ENCODE measurements at regions of chr6 and their contacts with region 1.

Region 1: GRCh38 chr6:29834564-29835436 is 7.2 kb downstream of the HLA-G start:
- DNase-seq: no peak
- CTCF ChIP-seq: peak; percentile 77

Region 2: DNA sequence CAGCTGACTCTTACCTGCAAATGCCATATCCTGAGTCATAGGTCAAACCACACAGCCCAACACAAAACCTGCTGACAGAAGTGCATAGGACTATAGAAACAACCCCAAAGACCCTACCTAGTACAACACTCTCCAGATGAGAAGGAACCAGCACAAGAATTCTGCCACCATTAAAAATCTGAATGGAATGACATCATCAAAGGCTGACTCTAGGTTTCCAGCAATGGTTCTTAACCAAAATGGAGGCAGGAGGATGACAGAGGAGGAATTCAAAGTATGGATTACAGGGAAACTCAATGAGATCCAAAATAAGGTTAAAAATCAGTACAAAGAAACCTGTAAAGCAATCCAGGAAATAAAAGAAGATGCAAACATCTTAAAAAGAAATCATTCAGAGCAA is 502.1 kb before region 1 on chr6:
- CTCF ChIA-PET with region 1: no interaction called
- POLR2A ChIA-PET with region 1: no interaction called
- DNase-seq: no peak
- CTCF ChIP-seq: no peak

Region 3: GRCh38 chr6:29702519-29703103 is 132.2 kb before region 1 on chr6:
- CTCF ChIA-PET with region 1: interaction called, 18 read pairs
- POLR2A ChIA-PET with region 1: no interaction called
- DNase-seq: peak; percentile 66
- CTCF ChIP-seq: peak; percentile 70

Region 4: DNA sequence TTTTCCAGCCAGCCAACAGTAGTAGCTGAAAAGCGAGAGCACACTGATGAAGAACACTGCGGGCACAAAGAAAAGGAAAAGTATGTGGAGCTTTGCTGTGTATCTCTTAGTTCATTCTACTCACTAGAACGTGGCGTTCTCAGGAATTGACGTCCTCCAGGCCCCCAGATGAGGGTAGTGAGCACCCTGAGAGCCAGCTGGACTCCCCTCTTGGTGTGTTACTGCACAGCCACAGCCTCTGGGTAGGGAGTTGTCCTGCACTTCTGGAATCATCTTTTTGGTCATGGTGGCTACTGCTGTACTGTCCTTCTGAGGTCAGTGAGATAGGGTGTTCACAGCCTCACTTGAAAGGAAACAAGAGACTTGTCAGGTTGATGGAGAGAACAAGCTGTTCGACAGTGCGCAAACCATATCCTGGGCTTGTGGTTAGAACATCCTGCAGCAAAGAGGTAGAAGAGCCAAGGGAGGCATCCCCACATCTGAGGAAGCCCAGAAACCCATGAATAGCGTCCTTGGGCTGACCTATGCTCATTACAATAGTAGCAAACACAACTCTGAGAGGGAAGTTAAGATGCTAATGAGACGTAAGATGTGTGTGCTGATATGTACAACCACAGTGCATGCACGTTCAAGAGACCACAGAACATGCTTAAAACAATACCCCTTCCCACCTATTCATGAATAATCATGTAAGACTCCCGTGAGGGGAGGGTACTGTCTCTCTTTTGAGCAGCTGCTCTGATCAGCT is 126.2 kb before region 1 on chr6:
- CTCF ChIA-PET with region 1: interaction called, 10 read pairs
- POLR2A ChIA-PET with region 1: no interaction called
- DNase-seq: no peak
- CTCF ChIP-seq: no peak

Region 5: GRCh38 chr6:29737707-29738630 is 96.8 kb before region 1 on chr6:
- CTCF ChIA-PET with region 1: interaction called, 63 read pairs
- POLR2A ChIA-PET with region 1: no interaction called
- DNase-seq: peak; percentile 66
- CTCF ChIP-seq: peak; percentile 76

Region 6: DNA sequence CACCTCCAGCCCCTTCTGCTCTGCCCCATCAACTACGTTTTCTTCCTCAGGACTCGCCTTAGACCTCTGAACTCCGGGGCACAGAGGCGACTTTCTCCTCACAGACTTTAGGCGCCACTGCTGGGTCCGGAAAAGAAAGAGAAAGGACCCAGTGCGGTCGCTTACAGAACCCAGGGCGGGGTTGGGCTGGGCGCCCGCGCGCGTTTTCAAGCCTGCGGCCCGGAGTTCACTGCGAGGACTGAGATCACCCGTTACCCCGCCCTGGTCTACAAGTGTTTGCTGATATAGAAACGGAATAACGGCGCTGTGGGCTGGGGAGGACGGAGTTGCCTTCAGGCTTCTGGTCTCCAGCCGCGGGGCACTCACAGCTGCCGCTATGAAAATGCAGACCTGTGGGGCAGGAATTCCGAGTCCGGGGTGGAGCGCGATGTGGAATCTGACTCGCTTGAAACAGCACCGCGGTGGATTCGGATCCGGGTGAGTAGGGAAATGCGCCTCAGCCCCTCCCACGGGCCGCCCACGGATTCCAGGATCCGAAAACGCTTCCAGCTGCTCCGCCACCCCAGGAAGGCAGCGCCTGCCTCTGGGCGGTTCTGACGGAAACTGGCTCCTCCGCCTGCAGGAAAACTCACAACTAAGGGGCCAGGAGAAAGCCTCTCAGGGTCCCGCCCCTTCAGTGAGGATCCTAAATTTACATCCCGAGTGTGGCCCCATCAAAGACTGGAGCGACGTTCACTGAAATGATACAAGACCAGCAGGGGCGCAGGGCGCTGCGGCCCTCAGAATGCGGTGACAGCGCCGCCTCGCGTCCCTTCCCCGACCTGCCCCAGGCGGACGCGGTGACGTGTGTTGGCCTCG is 82.1 kb before region 1 on chr6:
- CTCF ChIA-PET with region 1: interaction called, 11 read pairs
- POLR2A ChIA-PET with region 1: no interaction called
- DNase-seq: peak; percentile 87
- CTCF ChIP-seq: peak; percentile 97

Region 7: DNA sequence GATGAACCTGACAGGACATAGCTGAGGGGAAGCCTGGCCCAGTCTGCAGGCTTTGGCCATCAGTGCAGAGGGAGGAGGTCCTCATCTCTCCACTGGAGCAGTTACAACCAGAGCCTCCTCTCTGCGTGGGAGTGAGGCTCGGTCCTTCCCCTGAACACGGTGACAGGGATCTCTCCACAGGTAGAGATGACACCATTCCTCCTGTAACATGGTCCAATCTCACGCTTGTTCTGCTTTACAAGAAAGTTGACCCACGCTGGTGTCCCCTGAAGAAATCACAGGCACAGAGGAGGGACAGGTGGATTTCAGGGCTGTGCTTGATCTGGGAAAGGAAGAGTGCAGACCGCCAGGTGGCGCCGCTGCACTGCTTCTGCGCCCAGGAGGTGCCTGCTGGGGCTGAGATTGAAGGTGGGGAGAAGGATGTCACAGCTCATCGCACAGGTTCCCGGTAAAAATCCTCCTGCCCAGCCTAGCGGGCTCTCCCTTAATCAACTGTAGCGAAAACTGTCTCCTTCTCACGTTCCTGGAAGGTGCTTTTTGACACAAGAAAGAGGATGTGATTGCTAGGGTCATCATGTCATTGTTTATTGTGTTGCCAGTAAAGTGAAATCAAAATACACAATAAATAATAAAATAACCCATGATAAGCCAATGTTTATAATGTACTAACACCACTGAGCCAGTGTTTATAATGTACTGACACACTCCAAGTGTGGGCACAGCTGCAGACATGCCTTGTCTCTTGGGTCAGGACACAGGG is 13.3 kb after region 1 on chr6:
- CTCF ChIA-PET with region 1: interaction called, 13 read pairs
- POLR2A ChIA-PET with region 1: no interaction called
- DNase-seq: peak; percentile 73
- CTCF ChIP-seq: peak; percentile 92

Measured in GM10248 (cell line).